Transverse colon (tissue), 4 donors: ENCODE measurements at regions of chr13 and their contacts with region 1.

Region 1: DNA sequence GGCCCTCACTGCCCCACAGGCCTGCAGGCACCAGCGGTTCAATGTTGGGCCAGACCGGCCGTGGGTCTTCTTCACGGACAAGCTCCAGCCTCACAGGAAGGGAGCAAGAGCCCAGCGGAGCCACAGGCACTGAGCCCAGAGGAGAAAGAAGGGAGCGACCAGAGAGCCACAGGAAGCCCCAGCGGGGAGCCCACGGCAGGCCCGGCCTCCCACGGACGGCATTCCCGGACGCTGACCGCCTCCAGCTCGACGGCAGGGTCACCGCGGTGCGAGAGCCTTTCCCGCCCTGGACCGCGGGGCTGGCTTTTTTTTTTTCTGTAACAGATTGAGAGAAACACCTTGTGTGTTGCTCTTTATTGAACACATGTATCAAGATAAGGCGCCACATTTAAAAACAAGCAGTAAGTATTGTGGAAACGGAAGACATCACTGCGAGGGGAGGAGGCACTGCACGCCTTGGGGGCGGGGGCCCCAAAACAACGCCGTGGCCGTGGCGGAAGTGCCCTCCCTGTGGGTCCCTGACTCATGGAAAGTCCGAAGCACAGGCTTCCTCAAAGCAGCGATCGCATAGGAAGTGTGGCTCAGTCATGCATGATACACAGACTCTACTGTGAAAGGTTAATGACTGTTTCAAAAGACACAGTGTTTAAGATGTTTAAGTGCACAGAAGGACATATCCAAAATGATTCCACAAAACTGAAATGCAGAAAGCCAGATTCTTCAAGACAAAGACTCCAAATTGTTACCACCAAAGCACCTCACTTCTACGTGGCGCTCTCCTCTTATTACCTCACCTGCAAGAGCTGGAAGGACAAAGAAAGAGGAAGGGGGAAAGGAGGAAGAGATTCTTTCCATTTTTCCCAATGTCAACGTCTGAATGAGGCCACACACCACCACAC is 3.5 kb downstream of the RASA3 start:
- DNase-seq: peak; percentile 79
- H3K4me3 ChIP-seq: peak overlapping the region in 2 of 4 donors; percentile 19 to 29
- H3K27ac ChIP-seq: peak overlapping the region; percentile 81 to 89 (median 86)
- H3K4me1 ChIP-seq: peaks cover 20 to 49% (median 40%) of the 10 kb centered on the region in 4 donors
- H3K27me3 ChIP-seq: no peaks in the 10 kb centered on the region
- CTCF ChIP-seq: no peak
- EP300 ChIP-seq: no peak
- POLR2A ChIP-seq: peak; percentile 38

Region 2: DNA sequence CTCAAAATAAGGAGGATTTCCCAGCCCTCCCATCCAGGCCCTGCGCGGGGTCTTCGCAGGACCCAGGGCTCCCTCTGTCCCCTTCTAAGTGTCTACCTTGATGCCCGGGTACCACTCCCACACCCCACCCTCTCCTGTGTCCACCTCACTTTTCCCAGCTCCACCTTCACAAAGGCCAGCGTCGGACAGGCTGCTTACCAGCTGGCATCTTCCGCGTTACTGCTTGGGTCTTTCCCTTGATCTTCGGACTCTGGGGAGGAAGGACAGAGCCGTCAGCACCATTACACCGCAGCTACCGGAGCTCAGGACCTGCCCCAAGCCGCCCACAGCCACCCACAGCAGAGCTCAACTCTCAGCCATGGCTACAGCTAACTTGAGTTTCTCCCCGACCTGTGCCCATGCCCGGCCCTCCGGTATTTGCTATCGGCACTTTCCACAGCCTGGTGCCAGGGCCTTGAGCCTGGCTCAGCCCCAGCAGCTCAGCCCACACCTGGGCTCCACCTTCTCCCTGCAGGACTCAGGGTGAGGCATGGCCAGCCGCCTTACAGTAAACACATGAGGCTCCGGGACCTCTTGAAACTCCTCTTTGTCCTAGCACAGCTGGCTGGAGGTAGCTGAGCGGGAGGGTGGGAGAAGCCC is 158.8 kb before region 1 on chr13:
- in situ Hi-C with region 1: loop called in 1 of 4 experiments (anchors 10 kb)
- intact Hi-C with region 1: no loop called
- DNase-seq: peak; percentile 76
- H3K4me3 ChIP-seq: peak overlapping the region in 1 of 4 donors; percentile 15
- H3K27ac ChIP-seq: peak overlapping the region; percentile 76 to 85 (median 82)
- H3K4me1 ChIP-seq: peaks cover 17 to 22% (median 20%) of the 10 kb centered on the region in 4 donors
- H3K27me3 ChIP-seq: no peaks in the 10 kb centered on the region
- CTCF ChIP-seq: no peak
- EP300 ChIP-seq: no peak
- POLR2A ChIP-seq: peak; percentile 74

Region 3: GRCh38 chr13:114065141-114065925 is 63.5 kb before region 1 on chr13:
- in situ Hi-C with region 1: no loop called
- intact Hi-C with region 1: loop called (anchors 5 kb)
- DNase-seq: peak; percentile 80
- H3K4me3 ChIP-seq: peak overlapping the region in 3 of 4 donors; percentile 9 to 47 (median 34)
- H3K27ac ChIP-seq: peak overlapping the region; percentile 92 to 99 (median 95)
- H3K4me1 ChIP-seq: peaks cover 49 to 68% (median 52%) of the 10 kb centered on the region in 4 donors
- H3K27me3 ChIP-seq: no peaks in the 10 kb centered on the region
- CTCF ChIP-seq: no peak
- EP300 ChIP-seq: peak; percentile 90
- POLR2A ChIP-seq: peak; percentile 21